GM18951 (cell line): ENCODE measurements at regions of chr17 and their contacts with region 1.

Region 1: DNA sequence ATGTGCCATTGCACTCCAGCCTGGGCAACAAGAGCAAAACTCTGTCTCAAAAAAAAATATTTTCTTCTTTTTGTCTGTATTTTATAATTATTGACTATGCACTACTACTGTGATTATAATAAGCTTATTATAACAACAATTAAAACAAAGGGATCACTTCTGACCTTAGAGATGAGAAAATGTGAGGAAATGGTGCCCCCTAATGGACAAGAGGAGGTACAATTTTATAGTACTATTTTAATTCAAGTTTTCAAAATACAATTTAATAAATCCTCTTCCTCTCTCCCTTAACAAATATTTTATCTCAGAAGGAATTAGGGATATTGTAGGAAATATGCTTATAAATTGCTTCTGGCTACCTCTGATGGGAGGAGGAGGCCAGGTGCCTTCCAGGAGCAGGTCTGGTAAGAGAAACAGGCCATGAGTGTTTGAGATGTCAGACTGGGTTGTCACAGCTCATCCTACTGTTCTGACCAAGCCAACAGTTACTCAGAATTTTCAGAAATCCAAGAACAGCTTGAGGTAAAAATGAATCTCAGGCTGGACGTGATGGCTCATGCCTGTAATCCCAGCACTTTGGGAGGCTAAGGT is 14.0 kb downstream of the VPS53 start:
- POLR2A ChIP-seq: no peak

Region 2: GRCh38 chr17:309361-309888 is 391.2 kb before region 1 on chr17:
- in situ Hi-C with region 1: no loop called
- POLR2A ChIP-seq: no peak

Region 3: GRCh38 chr17:409848-410545 is 290.6 kb before region 1 on chr17:
- in situ Hi-C with region 1: loop called (anchors 10 kb)
- POLR2A ChIP-seq: peak; percentile 91

Region 4: DNA sequence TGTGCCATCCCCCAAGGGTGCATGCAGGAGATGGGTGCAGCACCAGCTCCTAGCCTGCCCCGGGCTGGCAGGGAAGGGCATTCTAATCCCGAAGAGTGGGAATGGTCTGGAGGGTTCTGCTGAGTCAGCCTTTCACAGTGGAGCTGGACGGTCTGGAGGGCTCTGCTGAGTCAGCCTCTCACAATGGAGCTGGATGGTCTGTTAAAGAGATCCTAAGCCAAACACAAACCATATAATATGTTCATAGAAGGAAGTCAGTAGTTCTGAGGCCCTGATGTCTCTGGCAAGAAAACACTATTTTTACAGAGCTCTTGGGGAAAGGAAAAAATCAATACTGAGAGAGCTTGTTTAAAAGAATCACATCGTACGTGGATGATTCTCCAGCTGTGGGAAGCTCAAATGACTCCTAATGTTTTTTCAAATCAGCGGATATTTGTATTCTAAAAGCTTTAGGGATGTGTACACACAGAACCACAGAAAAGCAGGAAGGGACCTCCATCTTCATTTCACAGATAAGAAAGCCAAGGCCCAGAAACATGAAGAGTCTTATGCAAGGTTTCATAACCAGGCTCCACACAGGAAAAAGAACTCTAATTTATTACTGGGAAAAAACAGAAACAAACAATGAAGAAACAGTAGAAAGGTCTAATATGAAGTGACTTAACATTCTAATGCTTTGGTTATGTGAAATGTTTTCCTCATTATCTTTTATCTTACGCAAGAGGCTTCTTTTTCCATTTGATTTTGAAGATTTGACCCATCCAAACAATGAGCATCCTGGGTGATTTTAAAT is 162.2 kb before region 1 on chr17:
- in situ Hi-C with region 1: no loop called
- POLR2A ChIP-seq: no peak

Region 5: GRCh38 chr17:647324-648197 is 53.0 kb before region 1 on chr17:
- in situ Hi-C with region 1: no loop called
- POLR2A ChIP-seq: no peak